ENCODE measurements at regions of chr15 and their contacts with region 1.

Region 1: DNA sequence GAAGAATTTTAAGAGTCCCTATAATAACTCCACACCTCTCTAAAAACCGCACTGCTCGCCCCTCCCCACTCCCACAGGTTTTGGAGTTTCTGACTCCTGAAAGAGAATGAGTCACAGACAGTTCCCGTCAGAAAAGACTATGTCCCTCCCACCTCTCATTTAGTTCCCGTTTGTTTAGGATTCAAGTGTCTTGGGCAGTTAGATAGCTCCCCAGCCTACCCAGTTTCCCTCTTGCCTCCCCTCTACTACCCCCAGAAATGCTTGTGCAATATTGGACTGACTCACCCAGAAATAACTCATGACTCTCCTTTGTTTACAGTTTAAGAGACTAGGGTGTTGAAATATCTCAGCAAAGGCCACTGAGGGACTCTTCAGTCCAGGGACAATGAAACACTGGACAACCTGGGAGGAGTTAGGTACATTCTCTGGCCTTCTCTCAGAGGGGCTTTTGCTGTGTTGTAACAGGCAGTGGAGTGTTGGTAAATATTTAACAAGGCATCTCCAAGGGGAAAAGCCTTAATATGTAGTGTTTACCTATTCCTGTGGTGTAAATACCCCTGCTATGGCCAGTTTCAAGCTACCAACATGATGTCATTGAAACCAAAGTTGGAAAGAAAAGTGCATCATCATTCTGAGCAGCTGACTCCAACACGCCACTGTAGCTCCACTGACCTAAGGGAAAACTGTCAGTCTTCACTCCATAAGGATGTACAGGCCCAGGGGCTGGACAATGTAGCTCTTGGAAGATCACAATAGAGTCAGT is 96.1 kb upstream of the CHD2 start:
- DNase-seq: peak; percentile 49
- CTCF ChIP-seq: no peak

Region 2: DNA sequence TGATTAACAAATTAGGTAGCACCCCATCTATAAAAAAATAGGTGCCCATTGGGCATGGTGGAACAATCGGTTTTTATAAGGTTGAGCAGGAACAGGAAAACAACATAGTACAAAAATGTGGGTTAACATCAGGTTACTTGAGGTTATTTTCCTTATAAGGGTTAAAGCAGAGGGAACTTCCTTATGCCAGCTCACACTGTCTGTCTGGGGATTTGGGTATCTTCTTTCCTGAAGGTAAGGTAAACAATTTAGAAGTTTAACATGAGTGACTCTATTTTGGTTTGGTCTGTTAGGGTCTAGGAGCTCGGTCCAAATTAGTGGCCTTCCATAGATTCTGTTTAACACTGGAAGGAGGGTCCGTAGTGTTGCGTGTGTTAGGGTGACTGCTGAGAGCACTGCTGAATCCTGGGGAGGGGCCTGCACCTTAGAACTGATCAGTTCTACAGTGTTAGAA is 110.8 kb after region 1 on chr15:
- in situ Hi-C with region 1: loop called (anchors 5 kb)
- DNase-seq: no peak
- CTCF ChIP-seq: no peak

Measured in GM13976 (cell line).